ENCODE measurements at regions of chr9 and their contacts with region 1.

Region 1: DNA sequence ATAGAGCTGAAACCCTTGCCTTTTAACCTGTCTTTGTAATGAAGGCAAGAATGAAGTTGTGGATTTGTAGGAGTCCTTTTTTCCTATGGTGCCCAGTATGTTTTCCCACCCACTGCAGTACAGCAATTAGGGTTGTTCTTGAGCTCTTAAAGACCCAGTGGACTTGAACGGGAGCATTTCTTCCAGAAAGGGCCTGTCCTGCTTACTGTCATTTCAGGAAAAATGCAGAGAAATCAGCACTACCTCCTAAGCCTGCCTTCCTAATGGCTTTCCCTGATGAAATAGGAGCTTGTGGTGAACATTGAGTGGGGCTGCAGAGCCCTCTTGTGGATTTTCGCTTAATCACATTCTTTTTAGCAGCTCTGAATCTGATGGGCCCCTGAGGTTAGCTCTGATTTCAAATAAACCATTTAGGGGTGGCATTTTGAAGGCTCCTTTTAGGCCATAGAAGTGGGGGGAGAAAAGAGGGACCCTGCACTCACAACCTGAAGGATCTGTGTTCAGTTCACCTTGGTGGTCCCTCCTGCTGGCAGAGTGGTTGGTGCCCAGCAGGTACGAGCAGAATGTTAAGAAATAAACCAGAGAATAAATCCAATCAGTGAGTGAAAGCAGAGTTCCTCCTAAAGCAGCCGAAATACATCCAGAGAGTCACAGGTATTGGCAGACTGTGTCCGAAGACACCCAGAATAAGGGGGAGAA is 188.0 kb upstream of the KLF9 start:
- DNase-seq: peak in 1 of 2 donors; percentile 59
- ATAC-seq: peak; percentile 73 to 85 (median 78)
- H3K4me3 ChIP-seq: peak overlapping the region; percentile 58
- H3K27ac ChIP-seq: peak overlapping the region; percentile 87
- H3K4me1 ChIP-seq: peaks cover 34% of the 10 kb centered on the region
- H3K27me3 ChIP-seq: no peaks in the 10 kb centered on the region
- CTCF ChIP-seq: peak; percentile 85

Region 2: DNA sequence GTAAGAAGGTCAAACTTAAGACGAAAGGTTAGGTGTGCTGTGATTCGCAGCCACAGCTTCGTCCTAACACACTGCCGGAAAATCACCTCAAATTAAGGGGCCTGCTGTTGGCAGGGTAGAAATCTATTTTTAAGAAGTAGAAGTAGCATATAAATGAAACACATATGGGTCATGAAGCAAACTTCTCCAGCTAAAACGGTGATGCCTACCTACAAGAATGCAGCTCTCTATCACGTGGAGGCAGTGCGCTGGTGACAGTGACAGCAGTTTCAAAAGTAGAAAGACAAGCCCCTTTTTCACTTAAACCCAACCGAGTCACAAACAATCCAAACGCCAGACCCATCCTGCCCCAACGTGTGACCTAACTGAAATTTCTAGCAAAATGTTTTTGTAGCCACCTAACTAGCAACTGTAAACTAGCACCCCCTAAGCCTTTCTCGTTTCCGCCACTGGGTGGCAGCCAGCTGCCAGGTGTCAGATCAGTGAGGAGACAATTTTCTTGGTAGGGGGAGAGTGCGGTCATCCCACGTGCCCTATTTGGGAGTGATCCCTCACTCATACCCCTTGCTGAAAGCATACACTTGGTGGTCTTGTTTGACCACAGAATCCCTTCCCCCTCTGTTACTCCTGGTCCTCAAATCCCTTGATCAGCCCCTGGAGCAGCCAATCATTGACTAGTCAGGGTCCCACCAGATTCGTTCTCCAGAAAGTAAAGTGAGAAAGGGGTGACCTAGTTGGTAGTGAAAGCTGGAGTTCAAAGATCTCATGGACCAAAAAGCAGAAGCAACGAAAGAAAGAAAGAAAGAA is 630.6 kb before region 1 on chr9:
- intact Hi-C with region 1: loop called in 1 of 2 experiments (anchors 5 kb)
- DNase-seq: peak; percentile 71 to 86
- ATAC-seq: peak; percentile 74 to 92 (median 78)
- H3K4me3 ChIP-seq: no peak overlapping the region
- H3K27ac ChIP-seq: no peak overlapping the region
- H3K4me1 ChIP-seq: no peaks in the 10 kb centered on the region
- H3K27me3 ChIP-seq: no peaks in the 10 kb centered on the region
- CTCF ChIP-seq: peak; percentile 89

Region 3: GRCh38 chr9:70352802-70353201 is 249.7 kb before region 1 on chr9:
- intact Hi-C with region 1: loop called (anchors 1 to 5 kb)
- DNase-seq: no peak
- ATAC-seq: peak in 2 of 4 donors; percentile 48 to 75
- H3K4me3 ChIP-seq: no peak overlapping the region
- H3K27ac ChIP-seq: no peak overlapping the region
- H3K4me1 ChIP-seq: peaks cover 10% of the 10 kb centered on the region
- H3K27me3 ChIP-seq: no peaks in the 10 kb centered on the region
- CTCF ChIP-seq: peak; percentile 66

Region 4: DNA sequence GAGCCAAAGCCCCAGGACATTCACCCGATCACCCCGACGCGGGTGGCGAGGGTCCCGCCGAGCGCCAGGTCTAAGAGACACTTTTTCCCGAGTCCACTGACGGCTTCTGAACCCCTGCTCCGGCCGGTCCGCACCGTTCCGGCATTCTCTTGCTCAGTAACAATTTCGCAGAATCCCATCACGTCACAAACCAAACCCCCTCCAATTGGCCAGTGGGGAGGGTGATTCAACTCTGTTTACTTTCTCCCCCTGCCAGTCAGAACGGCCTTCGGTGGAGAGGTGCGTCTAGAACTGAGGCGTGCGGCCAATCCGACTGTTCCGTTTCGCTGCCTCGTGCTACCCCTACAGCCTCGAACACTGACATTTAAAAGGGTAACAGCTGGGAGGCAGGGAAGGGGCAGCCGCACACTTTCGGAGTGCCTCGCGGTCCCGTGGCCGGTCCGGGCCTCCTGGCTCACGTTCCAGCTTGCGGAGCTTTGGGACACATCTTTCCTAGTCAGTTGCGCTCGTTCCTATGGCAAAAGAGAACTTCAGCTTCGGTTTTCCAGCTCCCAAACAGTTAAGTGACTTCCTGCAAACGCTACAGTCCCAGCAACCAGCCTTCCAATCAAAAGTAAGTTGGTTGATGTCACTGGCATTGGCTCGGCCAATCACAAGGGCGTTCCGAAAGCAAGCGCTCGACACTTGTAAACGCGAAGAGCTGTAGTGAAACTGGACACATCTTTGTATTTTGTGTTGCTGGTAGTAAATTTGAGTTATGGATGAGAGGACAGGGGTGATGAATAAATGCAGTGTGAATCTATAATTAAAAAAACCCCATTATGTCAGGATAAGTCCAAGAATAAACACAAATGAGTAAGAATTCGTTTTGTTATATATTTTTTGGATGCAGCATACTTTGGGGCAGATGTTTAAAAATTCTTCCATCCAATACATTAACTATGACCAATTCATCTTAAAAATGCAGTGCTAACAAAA is 188.4 kb before region 1 on chr9 and contains the start of gene KLF9:
- intact Hi-C with region 1: loop called (anchors 2 kb)
- DNase-seq: peak; percentile 95 to 98
- ATAC-seq: peak; percentile 63 to 74 (median 68)
- H3K4me3 ChIP-seq: peak within 1 kb of the TSS; percentile 84
- H3K27ac ChIP-seq: peak within 1 kb of the TSS; percentile 100
- H3K4me1 ChIP-seq: peaks cover 45% of the 10 kb centered on the region
- H3K27me3 ChIP-seq: no peaks in the 10 kb centered on the region
- CTCF ChIP-seq: no peak
- total RNA-seq, gene KLF9: 29.5 to 178 (median 94.7) TPM

Measured in psoas muscle (tissue), 8 donors.